Aorta (tissue), 5 donors: ENCODE measurements at regions of chr17 and their contacts with region 1.

Region 1: GRCh38 chr17:78019367-78019975 is 61.0 kb downstream of the TNRC6C start:
- DNase-seq: no peak
- ATAC-seq: no peak
- H3K4me3 ChIP-seq: no peak overlapping the region
- H3K27ac ChIP-seq: no peak overlapping the region
- H3K4me1 ChIP-seq: no peaks in the 10 kb centered on the region
- H3K27me3 ChIP-seq: no peaks in the 10 kb centered on the region

Region 2: GRCh38 chr17:77909236-77909635 is 110.2 kb before region 1 on chr17:
- intact Hi-C with region 1: no loop called
- DNase-seq: peak; percentile 70 to 84
- ATAC-seq: peak; percentile 72
- H3K4me3 ChIP-seq: no peak overlapping the region
- H3K27ac ChIP-seq: no peak overlapping the region
- H3K4me1 ChIP-seq: no peaks in the 10 kb centered on the region
- H3K27me3 ChIP-seq: peaks cover 0 to under 1% of the 10 kb centered on the region in 2 donors

Region 3: DNA sequence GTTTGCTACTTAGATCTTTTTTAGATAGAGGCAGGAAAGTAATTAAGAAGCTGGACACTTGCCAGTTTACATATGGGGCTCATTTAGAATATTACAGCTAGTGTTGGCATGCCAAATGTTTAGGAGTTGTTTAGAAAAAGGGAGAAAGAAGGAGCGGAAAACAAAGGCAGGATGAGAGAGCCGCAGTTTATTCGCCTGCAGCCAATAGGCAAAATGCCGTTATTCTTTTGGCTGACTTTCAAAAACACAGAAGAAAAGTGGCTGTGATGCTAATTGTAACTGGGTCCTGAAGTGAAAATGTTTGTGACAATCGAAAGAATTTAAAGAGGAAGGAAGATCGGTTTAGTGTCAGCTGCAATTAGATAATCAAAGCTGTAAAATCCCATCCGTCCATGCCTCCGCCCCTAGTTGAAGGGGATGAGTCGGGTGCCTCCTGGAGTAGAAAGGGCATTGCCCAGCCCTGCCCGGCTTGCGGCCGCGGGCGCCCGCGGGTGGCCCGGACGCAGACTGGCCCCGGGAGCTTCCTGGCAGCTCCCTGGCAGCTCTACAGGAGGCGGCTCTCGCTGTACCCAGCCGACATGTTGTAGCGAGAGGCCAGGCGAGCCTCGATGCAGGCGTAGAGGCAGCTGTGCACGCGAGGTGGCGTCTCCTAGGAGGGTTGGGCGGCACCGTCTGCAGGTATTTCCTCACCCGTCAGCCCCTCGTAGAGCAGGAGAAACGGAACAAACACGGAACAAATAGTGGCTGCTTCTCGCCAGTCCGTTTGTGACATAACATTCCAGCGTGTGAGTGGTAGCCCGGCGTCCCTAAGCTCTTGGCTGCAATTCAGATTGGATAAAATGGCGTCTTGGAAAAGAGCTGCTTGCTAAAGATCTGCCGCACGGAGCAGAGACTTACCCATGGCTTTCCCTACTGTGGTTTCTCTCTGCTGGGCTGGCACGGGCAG is 21.2 kb after region 1 on chr17:
- intact Hi-C with region 1: loop called in 1 of 2 experiments (anchors 1 kb)
- DNase-seq: peak; percentile 70 to 89
- ATAC-seq: peak; percentile 86
- H3K4me3 ChIP-seq: peak overlapping the region; percentile 50 to 77
- H3K27ac ChIP-seq: peak overlapping the region; percentile 31 to 100
- H3K4me1 ChIP-seq: no peaks in the 10 kb centered on the region
- H3K27me3 ChIP-seq: no peaks in the 10 kb centered on the region

Region 4: GRCh38 chr17:78058001-78058400 is 38.5 kb after region 1 on chr17:
- intact Hi-C with region 1: loop called in 1 of 2 experiments (anchors 5 kb)
- DNase-seq: no peak
- ATAC-seq: no peak
- H3K4me3 ChIP-seq: no peak overlapping the region
- H3K27ac ChIP-seq: peak overlapping the region in 1 of 2 donors; percentile 17
- H3K4me1 ChIP-seq: peaks cover 0 to 8% of the 10 kb centered on the region in 2 donors
- H3K27me3 ChIP-seq: no peaks in the 10 kb centered on the region

Region 5: DNA sequence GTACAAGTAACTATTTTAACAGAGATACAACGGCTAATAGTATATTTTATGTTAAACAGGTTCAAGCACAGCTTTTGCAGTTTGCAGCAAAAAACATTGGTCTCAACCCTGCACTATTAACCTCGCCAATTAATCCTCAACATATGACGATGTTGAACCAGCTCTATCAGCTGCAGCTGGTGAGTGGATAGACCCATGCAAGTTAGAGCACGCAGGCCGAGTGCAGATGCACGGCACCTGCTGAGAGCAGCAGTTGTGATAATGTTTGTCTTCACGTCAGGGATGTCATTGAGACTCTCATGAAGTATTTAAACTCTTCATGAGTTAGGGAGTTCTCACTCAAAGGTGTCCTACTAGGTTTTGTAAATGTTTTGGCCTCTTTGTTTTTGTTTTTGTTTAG is 63.5 kb after region 1 on chr17:
- intact Hi-C with region 1: loop called in 1 of 2 experiments (anchors 5 kb)
- DNase-seq: no peak
- ATAC-seq: no peak
- H3K4me3 ChIP-seq: no peak overlapping the region
- H3K27ac ChIP-seq: no peak overlapping the region
- H3K4me1 ChIP-seq: no peaks in the 10 kb centered on the region
- H3K27me3 ChIP-seq: no peaks in the 10 kb centered on the region